ENCODE measurements at regions of chr5 and their contacts with region 1.

Region 1: DNA sequence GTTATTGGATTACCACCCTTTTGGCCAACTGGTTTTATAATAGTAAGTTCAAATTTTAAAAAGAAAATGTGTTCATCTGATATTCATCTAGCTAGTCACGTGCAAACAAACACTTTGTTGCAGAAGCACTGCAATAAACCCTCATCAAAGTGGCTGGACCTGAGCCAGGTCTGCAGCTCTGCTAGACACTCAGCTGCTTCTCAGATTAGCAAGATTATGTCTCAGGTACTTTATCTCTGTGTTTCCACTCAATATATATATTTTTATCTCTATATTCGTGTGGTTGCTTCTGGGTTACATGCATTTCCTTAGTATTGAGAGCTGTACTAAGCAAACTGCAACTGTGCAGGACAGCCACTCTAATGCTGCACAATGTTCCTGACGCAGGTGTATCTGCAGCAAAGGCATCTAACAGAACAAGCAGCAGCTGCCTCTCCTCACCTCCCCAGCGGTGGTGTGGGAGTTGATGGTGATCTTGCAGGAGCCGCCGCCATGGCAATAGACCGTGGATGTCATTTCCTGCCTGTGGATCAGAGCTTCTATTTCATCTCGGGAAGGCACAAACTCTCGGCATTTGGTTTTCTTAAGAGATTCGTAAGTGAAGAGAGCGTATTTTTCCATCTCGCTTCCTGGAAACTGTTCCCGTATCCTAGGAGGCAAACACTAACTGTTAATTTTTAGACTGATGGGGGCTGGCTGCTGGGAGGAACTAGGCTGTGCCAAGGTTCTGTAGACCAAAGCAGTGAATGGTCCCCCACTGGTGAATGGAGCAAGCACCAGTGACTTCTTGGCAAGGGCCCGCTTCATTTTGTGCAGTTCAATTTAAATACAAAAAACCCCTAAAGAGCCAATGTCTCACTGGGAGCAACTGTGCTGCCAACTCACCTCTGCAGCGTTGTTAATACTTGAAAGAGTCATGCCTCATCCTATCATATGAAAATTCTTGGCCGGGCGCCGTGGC is 56.7 kb upstream of the RETREG1 start:
- DNase-seq: no peak
- H3K4me3 ChIP-seq: no peak overlapping the region
- H3K27ac ChIP-seq: no peak overlapping the region
- H3K4me1 ChIP-seq: no peaks in the 10 kb centered on the region
- H3K27me3 ChIP-seq: no peaks in the 10 kb centered on the region
- CTCF ChIP-seq: no peak

Region 2: DNA sequence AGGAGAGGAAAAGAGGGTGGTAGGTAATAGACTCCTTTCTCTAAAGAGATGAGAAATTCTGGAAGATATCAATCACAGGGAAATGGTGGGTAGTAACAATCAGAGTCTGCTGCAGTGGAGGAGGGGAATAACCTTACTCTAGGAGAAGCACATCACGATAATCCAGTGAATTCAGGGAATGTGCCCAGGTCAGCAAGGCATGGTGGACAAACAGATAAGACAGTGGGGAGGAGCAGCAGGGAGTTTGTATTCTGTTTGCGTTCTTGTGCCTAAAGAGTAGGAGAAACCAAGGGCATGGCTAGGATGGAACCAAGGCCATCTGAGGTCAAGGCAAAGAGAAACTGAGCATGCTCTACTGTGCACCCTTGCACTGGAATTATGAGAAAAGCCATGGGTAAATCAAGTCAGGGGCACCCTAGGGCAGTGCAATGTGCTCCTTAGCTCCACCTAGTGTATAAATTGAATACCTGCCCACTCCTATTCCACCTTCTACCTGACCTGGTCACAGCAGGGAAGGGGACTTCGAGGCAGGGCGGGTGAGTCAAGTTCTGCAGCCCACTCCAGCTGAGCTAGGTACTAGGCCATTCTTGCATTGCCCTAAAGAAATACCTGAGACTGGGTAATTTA is 88.4 kb before region 1 on chr5:
- intact Hi-C with region 1: no loop called
- DNase-seq: no peak
- H3K4me3 ChIP-seq: no peak overlapping the region
- H3K27ac ChIP-seq: no peak overlapping the region
- H3K4me1 ChIP-seq: no peaks in the 10 kb centered on the region
- H3K27me3 ChIP-seq: no peaks in the 10 kb centered on the region
- CTCF ChIP-seq: peak; percentile 32

Region 3: GRCh38 chr5:17204133-17204489 is 530.6 kb after region 1 on chr5:
- intact Hi-C with region 1: loop called (anchors 10 kb)
- DNase-seq: no peak
- H3K4me3 ChIP-seq: no peak overlapping the region
- H3K27ac ChIP-seq: no peak overlapping the region
- H3K4me1 ChIP-seq: no peaks in the 10 kb centered on the region
- H3K27me3 ChIP-seq: no peaks in the 10 kb centered on the region
- CTCF ChIP-seq: no peak